ENCODE measurements at regions of chrX and their contacts with region 1.

Region 1: DNA sequence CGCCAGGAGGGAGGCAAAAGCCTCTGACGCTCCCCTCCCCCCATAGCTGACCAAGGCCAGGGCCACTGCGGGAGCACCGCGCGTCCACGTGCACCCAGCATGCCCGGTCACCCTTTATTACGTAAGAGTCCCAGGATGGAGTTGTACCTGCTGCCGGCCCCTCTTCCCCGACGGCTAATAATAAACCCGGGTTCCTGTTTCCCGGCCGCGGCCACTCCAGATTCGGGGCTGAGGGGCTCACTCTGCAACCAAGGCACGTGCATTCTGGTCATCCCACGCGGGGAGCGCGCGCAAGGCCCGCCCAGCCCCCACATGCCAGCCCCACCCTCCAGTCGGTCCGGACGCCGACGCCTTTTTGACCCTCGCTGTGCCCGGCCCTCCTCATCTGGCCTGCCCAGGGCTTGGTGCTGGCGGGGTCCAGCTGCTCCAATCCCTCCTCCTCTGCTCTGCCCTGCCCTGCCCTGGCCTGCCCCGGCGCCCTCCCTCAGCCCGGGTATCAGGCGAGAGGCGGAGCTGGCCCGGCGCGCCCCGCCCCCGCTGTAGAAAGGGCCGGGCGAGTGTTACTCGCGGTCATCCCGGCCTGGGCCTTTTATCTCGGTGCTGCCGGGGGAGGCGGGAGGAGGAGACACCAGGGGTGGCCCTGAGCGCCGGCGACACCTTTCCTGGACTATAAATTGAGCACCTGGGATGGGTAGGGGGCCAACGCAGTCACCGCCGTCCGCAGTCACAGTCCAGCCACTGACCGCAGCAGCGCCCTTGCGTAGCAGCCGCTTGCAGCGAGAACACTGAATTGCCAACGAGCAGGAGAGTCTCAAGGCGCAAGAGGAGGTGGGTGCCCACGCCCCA is 2.5 kb downstream of the MID1IP1 start:
- DNase-seq: peak; percentile 83 to 91
- H3K4me3 ChIP-seq: peak overlapping the region; percentile 70 to 81
- H3K27ac ChIP-seq: peak overlapping the region; percentile 92 to 96
- H3K4me1 ChIP-seq: peaks cover 0 to 42% (median 0%) of the 10 kb centered on the region in 4 donors
- H3K27me3 ChIP-seq: no peaks in the 10 kb centered on the region
- CTCF ChIP-seq: no peak

Region 2: GRCh38 chrX:38929966-38930421 is 126.2 kb after region 1 on chrX:
- intact Hi-C with region 1: loop called (anchors 5 kb)
- DNase-seq: peak; percentile 33 to 72
- H3K4me3 ChIP-seq: no peak overlapping the region
- H3K27ac ChIP-seq: peak overlapping the region; percentile 68 to 70
- H3K4me1 ChIP-seq: peaks cover 0 to 12% (median 0%) of the 10 kb centered on the region in 4 donors
- H3K27me3 ChIP-seq: no peaks in the 10 kb centered on the region
- CTCF ChIP-seq: no peak

Region 3: DNA sequence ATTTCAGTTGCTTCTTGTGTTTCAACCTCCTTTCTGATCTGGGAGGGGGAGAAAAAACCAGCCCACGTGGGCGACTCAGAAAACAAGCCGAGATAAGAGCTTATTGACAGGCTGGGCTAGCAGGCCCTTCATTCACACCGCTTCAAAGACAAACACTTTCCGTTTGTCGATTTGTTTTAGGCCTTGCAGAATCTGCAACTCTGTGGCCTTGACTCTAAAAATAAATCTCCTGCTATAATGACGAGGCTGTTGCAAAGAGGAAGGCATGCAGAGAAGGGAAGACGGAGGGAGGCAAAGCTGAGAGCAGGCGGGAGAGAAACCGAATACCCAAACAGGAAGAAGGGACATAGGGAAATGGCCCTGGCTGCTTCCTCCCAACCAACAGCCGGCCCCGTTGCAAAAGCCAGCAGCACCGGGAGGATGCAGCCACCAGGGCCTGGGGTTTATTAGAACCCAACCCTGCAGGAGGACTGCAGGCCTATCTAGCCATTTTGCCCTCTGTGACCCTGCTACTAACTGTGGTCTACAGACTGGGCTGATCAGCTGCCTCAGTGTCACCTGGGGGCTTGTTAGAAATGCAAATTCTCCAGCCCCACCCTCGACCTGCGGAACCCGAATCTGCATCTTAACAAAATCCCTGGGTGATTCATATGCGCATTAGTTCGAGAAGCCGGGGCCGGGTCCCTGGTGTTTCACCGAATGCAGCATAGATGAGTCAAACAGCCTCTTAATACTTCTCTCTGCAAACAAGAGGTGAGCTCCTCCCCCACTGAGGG is 968.4 kb after region 1 on chrX:
- intact Hi-C with region 1: no loop called
- DNase-seq: no peak
- H3K4me3 ChIP-seq: no peak overlapping the region
- H3K27ac ChIP-seq: peak overlapping the region; percentile 44 to 59
- H3K4me1 ChIP-seq: peaks cover 0 to 25% (median 4%) of the 10 kb centered on the region in 4 donors
- H3K27me3 ChIP-seq: no peaks in the 10 kb centered on the region
- CTCF ChIP-seq: no peak